Prostate gland (tissue), 2 donors: ENCODE measurements at regions of chr20 and their contacts with region 1.

Region 1: DNA sequence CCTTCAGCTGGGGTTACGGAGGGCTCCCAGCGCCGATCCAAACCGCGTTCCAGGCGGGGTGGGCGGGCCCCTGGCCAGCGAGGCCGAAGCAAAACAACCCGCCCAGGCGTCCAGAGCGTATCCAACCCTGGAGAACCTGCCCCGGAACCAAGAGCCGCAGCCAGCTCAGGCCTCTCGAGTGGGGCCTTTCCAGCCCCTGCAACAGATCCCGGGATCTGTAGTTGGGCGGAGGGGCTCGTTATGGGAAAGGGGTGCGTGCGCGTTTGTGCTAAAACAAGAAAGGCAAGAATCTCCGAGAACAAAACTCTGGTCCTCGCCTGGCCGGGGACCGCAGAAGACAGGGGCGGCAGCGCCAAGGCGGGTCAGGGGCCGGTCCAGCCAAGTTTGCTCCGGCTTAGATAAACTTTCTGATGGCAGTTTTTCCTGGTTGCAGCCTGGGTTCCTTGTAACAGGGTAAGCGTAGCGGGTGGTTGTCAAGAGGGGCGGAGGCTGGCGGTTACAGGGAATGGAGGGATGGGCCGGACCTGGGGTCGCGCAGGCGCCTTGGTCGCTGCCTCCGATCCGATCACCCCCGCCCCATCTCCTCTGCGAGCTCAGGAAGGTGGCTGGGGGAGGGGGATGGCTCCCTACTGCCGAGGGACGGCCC is 448 bp upstream of the RIN2 start:
- DNase-seq: peak; percentile 94
- H3K4me3 ChIP-seq: peak overlapping the region; percentile 73 to 75
- H3K27ac ChIP-seq: peak overlapping the region; percentile 93 to 96
- H3K4me1 ChIP-seq: peaks cover 5% of the 10 kb centered on the region
- H3K27me3 ChIP-seq: no peaks in the 10 kb centered on the region
- CTCF ChIP-seq: no peak
- POLR2A ChIP-seq: peak; percentile 19

Region 2: GRCh38 chr20:19692685-19693119 is 64.9 kb before region 1 on chr20:
- intact Hi-C with region 1: loop called (anchors 2 kb)
- DNase-seq: peak; percentile 39
- H3K4me3 ChIP-seq: no peak overlapping the region
- H3K27ac ChIP-seq: no peak overlapping the region
- H3K4me1 ChIP-seq: no peaks in the 10 kb centered on the region
- H3K27me3 ChIP-seq: no peaks in the 10 kb centered on the region
- CTCF ChIP-seq: peak; percentile 87 to 96 (median 90)
- POLR2A ChIP-seq: no peak

Region 3: GRCh38 chr20:19710336-19711120 is 47.1 kb before region 1 on chr20:
- intact Hi-C with region 1: loop called (anchors 5 kb)
- DNase-seq: no peak
- H3K4me3 ChIP-seq: no peak overlapping the region
- H3K27ac ChIP-seq: no peak overlapping the region
- H3K4me1 ChIP-seq: peaks cover 4% of the 10 kb centered on the region
- H3K27me3 ChIP-seq: no peaks in the 10 kb centered on the region
- CTCF ChIP-seq: no peak
- POLR2A ChIP-seq: no peak

Region 4: GRCh38 chr20:19995220-19995863 is 237.7 kb after region 1 on chr20:
- intact Hi-C with region 1: no loop called
- DNase-seq: peak; percentile 24
- H3K4me3 ChIP-seq: no peak overlapping the region
- H3K27ac ChIP-seq: no peak overlapping the region
- H3K4me1 ChIP-seq: peaks cover 16% of the 10 kb centered on the region
- H3K27me3 ChIP-seq: no peaks in the 10 kb centered on the region
- CTCF ChIP-seq: peak; percentile 68 to 78 (median 74)
- POLR2A ChIP-seq: no peak